ENCODE measurements at regions of chr10 and their contacts with region 1.

Region 1: DNA sequence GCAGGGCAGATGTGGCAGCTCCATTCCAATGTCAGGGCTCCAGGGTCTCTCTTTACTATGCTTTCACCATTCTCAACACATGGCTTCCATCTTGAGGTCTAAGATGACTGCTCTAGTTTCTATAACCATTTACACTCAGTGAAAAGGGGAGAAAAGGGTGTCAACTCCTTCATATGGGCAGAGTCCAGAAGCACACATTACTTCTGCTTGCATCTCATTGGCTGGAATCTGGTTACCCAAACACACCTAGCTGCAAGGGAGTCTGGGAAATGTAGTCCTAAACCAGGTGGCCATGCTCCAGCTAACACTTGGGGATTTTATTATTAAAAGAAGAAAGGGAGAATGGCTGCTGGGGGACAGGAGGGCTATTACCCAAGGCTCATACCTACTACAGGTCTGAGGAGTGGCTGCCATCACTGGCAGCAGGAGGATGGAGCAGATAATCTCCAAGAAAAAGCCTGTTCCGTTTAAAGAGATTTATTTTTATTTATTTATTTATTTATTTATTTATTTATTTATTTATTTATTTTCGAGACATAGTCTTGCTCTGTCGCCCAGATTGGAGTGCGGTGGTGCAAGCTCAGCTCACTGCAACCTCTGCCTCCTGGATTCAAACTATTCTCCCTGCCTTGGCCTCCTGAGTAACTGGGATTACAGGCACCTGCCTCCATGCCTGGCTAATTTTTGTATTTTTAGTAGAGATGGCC is 29.1 kb upstream of the LBX1 start:
- DNase-seq: no peak
- H3K4me3 ChIP-seq: no peak overlapping the region
- H3K27ac ChIP-seq: no peak overlapping the region
- H3K4me1 ChIP-seq: no peaks in the 10 kb centered on the region
- H3K27me3 ChIP-seq: peaks cover 10 to 20% of the 10 kb centered on the region in 2 experiments
- CTCF ChIP-seq: no peak
- POLR2A ChIP-seq: no peak

Region 2: DNA sequence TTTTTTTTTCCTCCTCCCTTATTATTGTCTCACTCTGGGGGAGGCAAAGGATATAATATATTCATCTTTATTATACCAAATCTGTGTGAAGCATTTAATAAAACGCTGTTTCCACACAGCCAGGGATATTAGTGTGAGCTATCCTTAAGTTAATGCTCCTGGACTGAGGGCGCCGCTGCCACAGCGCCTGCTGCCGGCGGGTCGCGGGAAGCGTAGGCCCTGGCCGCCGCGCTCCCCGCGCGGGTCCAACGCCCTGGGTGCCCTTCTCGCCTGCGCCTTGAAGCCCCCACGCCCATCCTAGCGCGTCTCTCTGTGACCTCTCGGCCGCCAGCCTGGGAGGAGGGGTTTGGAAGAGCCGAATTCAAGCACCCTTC is 19.6 kb before region 1 on chr10:
- CTCF ChIA-PET with region 1: interaction called, 22 read pairs
- POLR2A ChIA-PET with region 1: no interaction called
- dilution Hi-C with region 1: no loop called
- intact Hi-C with region 1: no loop called
- DNase-seq: no peak
- H3K4me3 ChIP-seq: no peak overlapping the region
- H3K27ac ChIP-seq: no peak overlapping the region
- H3K4me1 ChIP-seq: peaks cover 2% of the 10 kb centered on the region
- H3K27me3 ChIP-seq: peaks cover 73 to 77% of the 10 kb centered on the region in 2 experiments
- CTCF ChIP-seq: peak; percentile 84 to 92
- POLR2A ChIP-seq: no peak